ENCODE measurements at regions of chr5 and their contacts with region 1.

Region 1: DNA sequence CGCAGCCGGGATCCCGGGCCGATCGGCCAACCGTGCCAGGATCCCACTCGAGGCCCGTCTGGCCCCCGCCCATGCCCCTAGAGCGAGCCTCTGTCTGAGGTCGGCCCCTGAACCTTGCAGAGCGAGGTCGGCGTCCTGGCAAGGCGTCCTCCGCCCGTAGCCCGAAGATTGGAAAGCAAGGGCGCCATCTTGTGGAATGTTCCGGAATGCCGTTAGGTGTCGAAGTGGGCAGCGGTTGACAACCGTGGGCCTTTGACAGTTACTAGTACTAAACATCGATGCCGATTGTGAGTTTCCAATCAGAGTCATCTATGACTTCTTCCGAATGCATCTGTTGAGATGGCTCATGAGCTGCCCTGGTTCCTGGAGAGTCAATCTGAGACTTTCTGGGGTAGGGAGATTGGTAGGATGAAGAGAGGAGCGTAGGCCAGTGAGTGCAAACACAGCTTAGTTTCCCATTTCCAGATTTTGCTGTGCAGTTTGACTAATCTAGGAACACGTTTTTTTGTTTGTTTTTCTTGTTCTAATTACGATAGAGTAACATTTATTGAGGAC is 923 bp upstream of the PLK2 start:
- DNase-seq: peak; percentile 86
- ATAC-seq: peak; percentile 65
- H3K4me3 Mint-ChIP-seq: peak overlapping the region; percentile 89
- H3K27ac Mint-ChIP-seq: peak overlapping the region; percentile 83
- H3K4me1 Mint-ChIP-seq: peaks cover 16% of the 10 kb centered on the region
- H3K27me3 Mint-ChIP-seq: no peaks in the 10 kb centered on the region
- CTCF ChIP-seq: no peak

Region 2: DNA sequence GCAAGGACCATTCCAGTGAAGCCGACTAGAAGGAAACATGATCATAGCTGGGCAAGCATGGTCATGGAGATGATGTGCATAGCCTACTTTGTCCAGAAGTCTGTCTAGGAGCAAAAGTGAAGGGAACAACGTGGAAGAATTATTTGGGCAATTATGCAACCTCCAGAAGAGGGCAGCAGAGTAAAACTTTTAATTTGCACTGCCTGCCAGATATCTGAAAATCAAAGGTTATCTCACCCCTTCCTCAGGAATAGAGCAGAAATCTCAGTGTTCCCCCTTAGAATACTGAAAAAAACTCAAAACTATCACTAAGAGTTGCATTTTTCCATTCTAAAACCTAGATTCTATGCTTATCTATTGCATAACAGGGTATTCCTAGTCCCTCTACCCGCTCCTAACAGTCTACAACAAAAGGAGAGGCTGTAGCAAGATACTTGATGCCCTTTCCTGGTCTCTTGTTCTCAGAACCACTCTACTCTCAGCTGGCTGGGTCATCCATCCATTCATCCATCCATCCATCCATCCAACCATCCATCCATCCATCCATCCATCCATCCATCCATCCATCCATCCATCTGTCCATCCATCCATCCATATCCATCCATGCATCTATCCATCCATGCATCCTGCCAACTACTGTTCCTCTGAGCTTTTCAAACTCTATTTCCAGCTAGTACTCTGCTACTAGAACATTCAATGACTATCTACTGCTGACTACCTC is 1559.8 kb before region 1 on chr5:
- CTCF ChIA-PET with region 1: no interaction called
- POLR2A ChIA-PET with region 1: no interaction called
- intact Hi-C with region 1: loop called (anchors 1 kb)
- DNase-seq: no peak
- ATAC-seq: peak; percentile 68
- H3K4me3 Mint-ChIP-seq: no peak overlapping the region
- H3K27ac Mint-ChIP-seq: no peak overlapping the region
- H3K4me1 Mint-ChIP-seq: no peaks in the 10 kb centered on the region
- H3K27me3 Mint-ChIP-seq: no peaks in the 10 kb centered on the region
- CTCF ChIP-seq: peak; percentile 10

Region 3: GRCh38 chr5:57298295-57298984 is 1162.4 kb before region 1 on chr5:
- CTCF ChIA-PET with region 1: interaction called, 81 read pairs
- POLR2A ChIA-PET with region 1: interaction called, 4 read pairs
- intact Hi-C with region 1: loop called (anchors 1 kb)
- DNase-seq: peak; percentile 35
- ATAC-seq: peak; percentile 90
- H3K4me3 Mint-ChIP-seq: peak overlapping the region; percentile 75
- H3K27ac Mint-ChIP-seq: no peak overlapping the region
- H3K4me1 Mint-ChIP-seq: peaks cover 16% of the 10 kb centered on the region
- H3K27me3 Mint-ChIP-seq: peaks cover 2% of the 10 kb centered on the region
- CTCF ChIP-seq: peak; percentile 48

Region 4: GRCh38 chr5:57779383-57780223 is 681.2 kb before region 1 on chr5:
- CTCF ChIA-PET with region 1: interaction called, 54 read pairs
- POLR2A ChIA-PET with region 1: no interaction called
- intact Hi-C with region 1: loop called (anchors 1 kb)
- DNase-seq: no peak
- ATAC-seq: peak; percentile 31
- H3K4me3 Mint-ChIP-seq: no peak overlapping the region
- H3K27ac Mint-ChIP-seq: no peak overlapping the region
- H3K4me1 Mint-ChIP-seq: no peaks in the 10 kb centered on the region
- H3K27me3 Mint-ChIP-seq: peaks cover 2% of the 10 kb centered on the region
- CTCF ChIP-seq: no peak

Region 5: GRCh38 chr5:58335518-58335917 is 125.3 kb before region 1 on chr5:
- CTCF ChIA-PET with region 1: no interaction called
- POLR2A ChIA-PET with region 1: no interaction called
- intact Hi-C with region 1: no loop called
- DNase-seq: no peak
- ATAC-seq: no peak
- H3K4me3 Mint-ChIP-seq: no peak overlapping the region
- H3K27ac Mint-ChIP-seq: no peak overlapping the region
- H3K4me1 Mint-ChIP-seq: no peaks in the 10 kb centered on the region
- H3K27me3 Mint-ChIP-seq: peaks cover 12% of the 10 kb centered on the region
- CTCF ChIP-seq: no peak

Region 6: DNA sequence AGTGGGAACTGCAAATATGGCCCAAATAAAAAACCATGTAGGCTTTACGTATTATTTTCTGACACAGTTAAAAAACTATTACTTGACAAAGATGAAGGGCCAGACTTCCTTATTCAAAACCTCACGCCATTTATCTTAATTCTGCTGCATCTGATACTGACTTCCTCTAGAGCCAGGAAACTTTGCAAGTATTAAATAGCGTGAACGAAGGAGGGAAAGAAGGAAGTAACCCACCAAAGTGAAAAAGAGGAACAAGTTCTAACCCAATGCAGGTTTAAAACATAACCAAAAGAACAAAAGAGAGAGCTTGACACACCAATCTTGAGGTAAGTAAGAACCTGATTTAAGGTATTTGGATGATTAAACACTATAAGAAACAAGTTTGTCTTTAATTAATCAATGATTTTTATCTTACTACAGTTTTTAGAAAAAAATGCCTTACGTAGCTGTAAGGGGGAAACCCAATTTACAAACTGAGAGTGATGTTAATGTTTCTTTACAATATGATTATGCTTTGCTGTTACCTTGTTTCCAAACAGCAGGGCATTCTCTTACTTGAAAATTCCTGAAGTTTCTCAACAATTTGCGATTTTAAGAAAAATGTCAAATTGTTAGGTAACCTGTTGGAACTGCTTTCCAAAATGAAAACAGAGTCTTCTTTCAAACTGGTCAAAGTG is 30.5 kb after region 1 on chr5 and contains the start of gene GAPT:
- CTCF ChIA-PET with region 1: interaction called, 5 read pairs
- POLR2A ChIA-PET with region 1: interaction called, 7 read pairs
- intact Hi-C with region 1: loop called (anchors 1 kb)
- DNase-seq: no peak
- ATAC-seq: peak; percentile 87
- H3K4me3 Mint-ChIP-seq: peak within 1 kb of the TSS; percentile 82
- H3K27ac Mint-ChIP-seq: peak within 1 kb of the TSS; percentile 95
- H3K4me1 Mint-ChIP-seq: peaks cover 66% of the 10 kb centered on the region
- H3K27me3 Mint-ChIP-seq: no peaks in the 10 kb centered on the region
- CTCF ChIP-seq: no peak
- total RNA-seq, gene GAPT: 39.8 and 40.3 TPM in 2 replicates

Region 7: DNA sequence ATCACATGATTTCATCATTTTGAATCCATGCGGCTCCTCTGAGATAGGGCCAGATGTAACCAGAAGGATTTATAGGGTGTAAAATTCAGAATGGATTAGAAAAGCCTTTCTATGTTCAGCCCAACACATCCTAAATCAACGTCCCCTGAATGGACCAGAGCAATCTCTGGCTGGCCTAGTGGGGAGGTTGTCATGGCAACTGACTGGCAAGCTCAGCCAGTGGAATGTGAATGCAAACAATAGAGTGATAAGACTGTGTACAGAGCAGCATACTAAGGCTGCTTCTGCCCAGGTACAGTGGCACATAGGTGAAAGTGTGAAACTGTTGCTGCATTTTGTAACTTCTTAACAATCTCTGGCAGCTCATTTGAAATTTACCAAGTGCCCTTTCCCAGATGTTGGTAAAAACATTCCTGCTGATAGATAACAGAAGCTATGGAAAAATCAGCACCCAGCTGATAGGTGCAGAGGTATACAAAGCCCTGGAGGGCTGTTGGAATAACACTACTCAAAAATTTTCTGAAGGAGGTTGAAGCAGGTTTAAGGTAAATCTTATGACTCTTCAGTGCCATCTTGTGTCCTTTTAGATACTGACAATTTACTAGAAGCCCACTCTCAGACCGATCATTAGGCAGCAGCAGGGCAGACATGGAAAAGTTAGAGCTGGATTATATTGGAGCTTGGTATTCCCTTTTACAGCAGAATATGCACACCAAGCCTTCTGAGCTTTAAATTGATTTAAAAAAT is 389.3 kb after region 1 on chr5:
- CTCF ChIA-PET with region 1: interaction called, 18 read pairs
- POLR2A ChIA-PET with region 1: no interaction called
- intact Hi-C with region 1: loop called (anchors 1 kb)
- DNase-seq: no peak
- ATAC-seq: peak; percentile 64
- H3K4me3 Mint-ChIP-seq: no peak overlapping the region
- H3K27ac Mint-ChIP-seq: no peak overlapping the region
- H3K4me1 Mint-ChIP-seq: peaks cover 2% of the 10 kb centered on the region
- H3K27me3 Mint-ChIP-seq: no peaks in the 10 kb centered on the region
- CTCF ChIP-seq: peak; percentile 76